ENCODE measurements at regions of chr5 and their contacts with region 1.

Region 1: GRCh38 chr5:54443270-54443669 is 12.2 kb upstream of the HSPB3 start:
- DNase-seq: no peak
- H3K4me3 ChIP-seq: no peak overlapping the region
- CTCF ChIP-seq: peak; percentile 35

Region 2: DNA sequence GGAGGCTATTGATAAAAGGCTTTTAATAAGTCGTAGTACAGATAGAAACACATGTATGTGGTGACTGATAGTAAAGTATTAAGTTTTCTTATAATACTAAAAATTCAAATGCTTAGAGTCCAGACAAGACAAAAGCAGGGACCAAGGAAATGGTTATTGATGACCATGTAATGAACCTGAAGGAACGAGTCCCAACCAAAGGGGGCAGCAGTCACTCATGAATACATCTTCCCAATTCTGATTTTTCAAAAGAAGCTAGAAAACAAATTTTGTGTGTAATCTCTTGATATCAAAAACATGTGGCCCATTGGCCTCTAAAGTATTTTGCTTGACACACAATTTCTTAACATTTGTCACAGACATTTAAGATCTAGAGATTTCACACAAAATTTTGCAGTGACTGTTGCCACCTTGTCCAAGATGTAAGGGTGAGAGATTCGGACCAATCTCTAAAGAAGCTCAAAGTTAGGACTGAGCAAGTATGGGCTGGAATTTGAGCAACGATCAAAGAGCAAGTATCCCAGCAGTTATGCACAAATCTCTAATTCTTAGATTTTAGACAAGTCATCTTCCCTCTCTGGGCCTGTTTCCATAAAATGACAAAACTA is 199.7 kb before region 1 on chr5:
- CTCF ChIA-PET with region 1: interaction called, 12 read pairs
- POLR2A ChIA-PET with region 1: no interaction called
- DNase-seq: no peak
- H3K4me3 ChIP-seq: no peak overlapping the region
- CTCF ChIP-seq: peak; percentile 53

Region 3: GRCh38 chr5:54404568-54404967 is 38.7 kb before region 1 on chr5:
- CTCF ChIA-PET with region 1: no interaction called
- POLR2A ChIA-PET with region 1: no interaction called
- DNase-seq: no peak
- H3K4me3 ChIP-seq: no peak overlapping the region
- CTCF ChIP-seq: no peak

Region 4: DNA sequence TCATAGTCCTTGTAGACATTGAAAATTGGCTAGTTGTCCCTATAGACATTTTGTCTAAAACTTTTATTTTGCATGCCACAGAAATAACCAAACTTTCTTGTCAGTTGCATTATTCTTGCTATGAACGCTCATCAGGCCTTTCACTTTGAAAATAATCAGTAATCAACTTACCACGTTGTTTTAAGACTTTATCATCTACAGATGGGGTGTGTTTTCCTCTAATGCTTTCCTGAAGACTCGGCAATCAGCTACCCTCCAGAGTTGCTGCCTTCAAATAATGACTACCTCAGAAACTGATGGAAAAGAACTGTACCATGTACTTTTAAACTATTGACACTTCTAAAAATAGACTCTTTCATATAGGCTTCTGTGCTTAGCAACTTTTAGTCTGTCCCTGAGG is 21.3 kb before region 1 on chr5:
- CTCF ChIA-PET with region 1: interaction called, 19 read pairs
- POLR2A ChIA-PET with region 1: no interaction called
- DNase-seq: no peak
- H3K4me3 ChIP-seq: no peak overlapping the region
- CTCF ChIP-seq: no peak

Region 5: DNA sequence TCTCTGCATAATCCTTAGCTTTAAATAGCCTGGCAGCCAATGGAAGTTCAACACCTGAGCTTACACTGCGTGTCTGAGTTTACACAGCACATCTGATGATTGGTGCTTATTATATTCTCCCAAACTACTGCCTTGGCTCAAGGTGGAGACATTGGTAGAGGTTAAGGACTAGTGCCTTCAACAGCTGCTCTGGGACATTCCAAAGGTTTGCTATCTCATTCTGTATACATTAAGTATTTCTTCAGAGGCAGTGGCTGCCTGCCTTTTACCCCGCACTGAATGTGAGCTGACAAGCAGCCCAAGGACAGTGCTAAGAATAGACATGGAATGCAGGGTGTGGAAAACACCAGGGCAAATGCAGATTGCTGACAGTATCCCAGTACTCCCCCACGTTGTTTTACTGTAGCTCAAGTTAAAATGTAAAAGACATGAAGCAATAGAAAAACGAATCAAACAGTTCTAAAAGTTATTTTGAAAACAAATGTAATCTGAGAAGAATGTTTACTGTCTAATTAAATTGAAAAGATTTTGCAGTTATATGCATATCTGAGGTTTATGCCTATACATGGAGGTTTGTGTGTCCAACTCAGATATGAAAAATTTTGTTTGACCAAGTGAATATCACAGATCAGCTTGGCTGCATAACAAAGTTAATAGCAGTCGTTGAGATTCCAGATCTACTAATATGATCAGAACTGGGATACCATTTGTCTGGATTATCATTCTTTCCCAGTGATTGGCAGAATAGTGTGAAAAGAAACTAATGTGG is 14.0 kb after region 1 on chr5:
- CTCF ChIA-PET with region 1: interaction called, 61 read pairs
- POLR2A ChIA-PET with region 1: interaction called, 4 read pairs
- DNase-seq: peak; percentile 84
- H3K4me3 ChIP-seq: peak overlapping the region; percentile 32
- CTCF ChIP-seq: no peak

Region 6: GRCh38 chr5:54469622-54470021 is 26.4 kb after region 1 on chr5:
- CTCF ChIA-PET with region 1: interaction called, 11 read pairs
- POLR2A ChIA-PET with region 1: no interaction called
- DNase-seq: no peak
- H3K4me3 ChIP-seq: peak overlapping the region; percentile 38
- CTCF ChIP-seq: no peak

Region 7: DNA sequence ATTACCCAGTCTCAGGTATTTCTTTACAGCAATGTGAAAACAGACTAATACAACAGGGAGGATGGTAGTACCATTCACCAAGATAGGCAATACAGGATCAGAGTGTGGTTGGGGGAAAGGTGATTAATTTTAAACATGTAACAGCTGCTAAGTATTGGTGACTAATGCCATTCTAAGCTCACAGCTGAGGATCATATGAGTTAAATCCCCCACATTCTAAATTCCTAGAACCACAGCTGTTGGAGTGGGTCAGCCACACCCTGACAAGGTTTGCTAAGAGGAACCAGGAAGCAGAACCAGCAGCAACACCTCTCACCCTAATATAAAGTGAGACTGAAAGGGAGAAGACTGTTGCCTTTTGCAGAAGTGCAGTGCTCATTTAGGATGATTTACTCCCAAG is 37.0 kb after region 1 on chr5:
- CTCF ChIA-PET with region 1: interaction called, 12 read pairs
- POLR2A ChIA-PET with region 1: no interaction called
- DNase-seq: no peak
- H3K4me3 ChIP-seq: no peak overlapping the region
- CTCF ChIP-seq: no peak

Region 8: DNA sequence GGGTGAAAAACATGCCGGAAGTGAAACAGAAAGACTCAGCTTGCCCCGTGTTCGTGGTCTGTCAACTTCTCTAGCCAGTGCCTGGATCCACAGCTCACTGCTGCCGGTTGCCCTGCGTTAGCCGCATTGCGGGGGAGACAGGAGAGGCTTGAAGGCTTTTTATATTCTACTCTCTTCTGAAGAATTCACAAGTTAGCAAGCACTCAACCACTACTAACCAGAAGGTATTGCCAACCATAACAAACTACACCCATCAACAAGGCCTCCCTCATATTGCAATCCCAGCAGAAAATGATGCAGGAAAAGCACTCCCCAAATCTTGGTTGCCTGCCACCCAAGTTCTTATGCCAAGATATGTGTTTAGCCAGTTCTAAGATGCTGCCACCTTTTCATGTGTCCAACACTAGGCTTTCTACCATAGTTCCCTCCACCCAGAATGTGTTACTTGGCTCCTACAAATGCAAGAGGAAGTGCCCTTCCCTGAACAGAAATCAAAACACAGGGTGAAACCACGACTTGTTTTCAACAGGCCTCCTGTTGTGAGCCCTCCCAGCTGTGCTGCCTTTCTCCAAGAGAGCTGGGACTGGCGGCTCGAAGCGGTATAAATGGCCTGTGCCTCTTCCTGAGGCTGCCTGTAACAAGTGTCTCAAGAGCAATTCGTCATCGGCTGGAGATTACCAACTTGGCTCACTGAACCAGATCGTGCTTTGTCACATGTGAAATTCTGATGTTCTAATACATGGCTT is 203.3 kb after region 1 on chr5:
- CTCF ChIA-PET with region 1: no interaction called
- POLR2A ChIA-PET with region 1: no interaction called
- DNase-seq: no peak
- H3K4me3 ChIP-seq: no peak overlapping the region
- CTCF ChIP-seq: no peak

Region 9: DNA sequence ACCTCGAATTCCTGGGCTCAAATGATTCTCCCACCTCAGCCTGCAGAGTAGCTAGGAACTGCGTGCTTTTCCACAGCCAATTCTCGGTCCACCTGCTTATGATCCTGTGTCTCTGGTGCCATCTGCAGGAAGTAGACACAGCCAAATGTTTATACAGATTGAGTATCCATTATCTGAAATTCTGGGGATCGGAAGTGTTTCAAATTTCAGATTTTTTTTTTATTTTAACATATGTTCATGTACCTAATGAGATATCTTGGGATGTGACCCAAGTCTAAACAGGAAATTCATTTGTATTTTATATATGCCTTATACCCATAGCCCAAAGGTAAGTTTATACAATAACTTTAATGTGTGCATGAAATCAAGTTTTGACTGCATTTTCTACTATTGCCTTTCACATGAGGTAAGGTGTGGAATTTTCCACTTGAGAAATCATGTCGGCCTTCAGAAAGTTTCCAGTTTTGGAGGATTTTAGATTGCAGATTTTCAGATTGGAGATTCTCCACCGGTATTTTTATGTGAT is 452.6 kb after region 1 on chr5:
- CTCF ChIA-PET with region 1: interaction called, 18 read pairs
- POLR2A ChIA-PET with region 1: no interaction called
- DNase-seq: no peak
- H3K4me3 ChIP-seq: no peak overlapping the region
- CTCF ChIP-seq: peak; percentile 49

Measured in AG04449 (cell line).